Testis (tissue), 5 donors: ENCODE measurements at regions of chr7 and their contacts with region 1.

Region 1: DNA sequence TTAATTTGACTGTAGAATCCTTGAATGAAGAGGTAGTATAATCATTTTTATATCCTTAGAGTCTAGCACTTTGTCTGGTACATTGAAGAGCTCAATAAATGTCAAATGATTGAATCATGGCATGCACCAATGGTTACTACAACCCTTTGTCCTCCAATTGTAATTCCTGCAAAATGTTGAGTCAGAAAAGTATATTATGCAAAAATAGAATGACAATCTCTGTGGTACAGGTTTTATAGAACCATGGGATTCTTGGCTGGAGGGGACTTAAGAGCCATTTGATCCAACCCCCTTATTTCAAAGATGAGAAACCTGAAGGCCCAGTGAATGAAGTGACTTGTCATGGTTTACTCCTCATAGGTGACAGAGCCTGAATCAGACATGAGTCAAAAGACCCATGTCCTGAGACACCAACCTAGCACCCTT is 30.9 kb upstream of the SMKR1 start:
- DNase-seq: no peak
- H3K4me3 ChIP-seq: no peak overlapping the region
- H3K27ac ChIP-seq: no peak overlapping the region
- H3K4me1 ChIP-seq: peaks cover 5% of the 10 kb centered on the region
- H3K27me3 ChIP-seq: no peaks in the 10 kb centered on the region
- CTCF ChIP-seq: no peak
- POLR2A ChIP-seq: no peak

Region 2: GRCh38 chr7:129367700-129368388 is 103.6 kb before region 1 on chr7:
- intact Hi-C with region 1: loop called (anchors 5 kb)
- DNase-seq: peak; percentile 86
- H3K4me3 ChIP-seq: no peak overlapping the region
- H3K27ac ChIP-seq: no peak overlapping the region
- H3K4me1 ChIP-seq: peaks cover 5% of the 10 kb centered on the region
- H3K27me3 ChIP-seq: no peaks in the 10 kb centered on the region
- CTCF ChIP-seq: peak; percentile 59 to 81 (median 61)
- POLR2A ChIP-seq: no peak

Region 3: GRCh38 chr7:129617652-129618051 is 146.2 kb after region 1 on chr7:
- intact Hi-C with region 1: no loop called
- DNase-seq: no peak
- H3K4me3 ChIP-seq: no peak overlapping the region
- H3K27ac ChIP-seq: no peak overlapping the region
- H3K4me1 ChIP-seq: peaks cover 15% of the 10 kb centered on the region
- H3K27me3 ChIP-seq: no peaks in the 10 kb centered on the region
- CTCF ChIP-seq: no peak
- POLR2A ChIP-seq: no peak